ENCODE measurements at regions of chr2 and their contacts with region 1.

Region 1: DNA sequence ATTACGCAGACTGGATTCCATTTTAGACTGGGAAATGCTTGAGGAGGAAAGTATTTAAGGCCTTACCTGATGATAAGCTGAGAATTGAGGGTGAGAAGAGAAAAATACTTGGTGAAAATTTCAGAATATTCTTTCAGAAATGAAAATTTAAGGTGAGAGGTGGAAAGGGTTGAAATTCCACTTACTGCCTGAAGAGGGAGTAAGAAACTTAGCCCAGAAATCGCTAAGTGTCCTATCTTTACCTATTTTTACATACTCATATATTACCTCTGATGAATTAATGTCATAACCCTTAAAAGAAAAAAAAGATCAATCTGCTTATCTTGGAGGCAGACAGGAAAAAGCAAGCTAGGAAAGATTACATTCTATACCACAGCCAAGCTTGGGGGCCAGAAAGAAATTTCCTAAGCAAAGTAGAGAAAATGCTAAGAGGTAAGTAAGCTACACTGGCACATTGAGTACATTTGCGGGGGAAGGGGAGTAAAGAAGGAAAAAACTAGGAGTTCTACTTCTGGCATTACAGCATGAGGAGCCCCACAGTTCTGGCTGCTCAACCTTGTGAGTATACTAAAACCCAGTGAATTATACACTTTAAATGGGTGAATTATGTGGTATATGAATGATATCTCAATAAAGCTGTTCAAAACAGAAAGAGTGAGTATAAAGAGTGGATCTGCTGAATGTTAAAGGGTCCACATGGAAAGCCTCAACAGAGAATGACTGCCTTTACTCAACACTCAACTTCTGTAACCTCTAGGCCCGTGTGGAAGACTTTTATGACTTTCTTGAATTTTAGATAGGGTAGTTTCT is 33.8 kb downstream of the SMC6 start:
- DNase-seq: peak; percentile 24
- H3K4me3 ChIP-seq: no peak overlapping the region; a peak in 1 of 4 replicates
- H3K27ac ChIP-seq: 0 out of 4 replicates have a peak overlapping the region, but pooled peaks of 1 of the 2 experiments have one; percentile 5
- H3K4me1 ChIP-seq: no peaks in the 10 kb centered on the region
- H3K27me3 ChIP-seq: no peaks in the 10 kb centered on the region
- CTCF ChIP-seq: peak; percentile 94
- EP300 ChIP-seq: no peak
- RAD21 ChIP-seq: peak; percentile 82

Region 2: DNA sequence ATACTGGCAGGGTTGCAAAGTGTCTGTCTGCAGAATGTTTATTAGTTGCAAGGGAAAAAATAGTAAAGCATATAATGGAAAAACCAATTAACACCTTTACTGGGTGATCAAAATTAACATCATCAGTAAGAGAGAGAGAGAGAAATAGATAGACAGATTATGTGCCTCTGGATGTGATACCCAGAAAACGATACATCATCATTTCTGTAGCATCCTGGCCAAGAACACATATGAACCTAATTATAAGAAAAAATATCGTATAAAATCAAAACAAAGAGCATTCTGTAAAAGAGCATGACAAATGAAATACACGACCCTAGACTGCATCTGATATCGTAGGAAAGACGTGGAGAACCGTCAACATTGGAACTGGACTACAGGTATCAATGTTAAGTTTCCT is 30.8 kb before region 1 on chr2:
- CTCF ChIA-PET with region 1: interaction called, 10 read pairs
- POLR2A ChIA-PET with region 1: no interaction called
- DNase-seq: no peak
- H3K4me3 ChIP-seq: no peak overlapping the region
- H3K27ac ChIP-seq: no peak overlapping the region
- H3K4me1 ChIP-seq: no peaks in the 10 kb centered on the region
- H3K27me3 ChIP-seq: no peaks in the 10 kb centered on the region
- CTCF ChIP-seq: no peak
- EP300 ChIP-seq: no peak
- RAD21 ChIP-seq: no peak

Region 3: GRCh38 chr2:17736989-17737388 is 17.2 kb after region 1 on chr2:
- CTCF ChIA-PET with region 1: interaction called, 42 read pairs
- POLR2A ChIA-PET with region 1: no interaction called
- DNase-seq: no peak
- H3K4me3 ChIP-seq: no peak overlapping the region
- H3K27ac ChIP-seq: peak overlapping the region in 1 of 2 experiments; percentile 89; a peak in 3 of 4 replicates
- H3K4me1 ChIP-seq: peaks cover 2 to 9% of the 10 kb centered on the region in 2 experiments; a peak in 3 of 4 replicates
- H3K27me3 ChIP-seq: no peaks in the 10 kb centered on the region
- CTCF ChIP-seq: no peak
- EP300 ChIP-seq: no peak
- RAD21 ChIP-seq: no peak

Region 4: DNA sequence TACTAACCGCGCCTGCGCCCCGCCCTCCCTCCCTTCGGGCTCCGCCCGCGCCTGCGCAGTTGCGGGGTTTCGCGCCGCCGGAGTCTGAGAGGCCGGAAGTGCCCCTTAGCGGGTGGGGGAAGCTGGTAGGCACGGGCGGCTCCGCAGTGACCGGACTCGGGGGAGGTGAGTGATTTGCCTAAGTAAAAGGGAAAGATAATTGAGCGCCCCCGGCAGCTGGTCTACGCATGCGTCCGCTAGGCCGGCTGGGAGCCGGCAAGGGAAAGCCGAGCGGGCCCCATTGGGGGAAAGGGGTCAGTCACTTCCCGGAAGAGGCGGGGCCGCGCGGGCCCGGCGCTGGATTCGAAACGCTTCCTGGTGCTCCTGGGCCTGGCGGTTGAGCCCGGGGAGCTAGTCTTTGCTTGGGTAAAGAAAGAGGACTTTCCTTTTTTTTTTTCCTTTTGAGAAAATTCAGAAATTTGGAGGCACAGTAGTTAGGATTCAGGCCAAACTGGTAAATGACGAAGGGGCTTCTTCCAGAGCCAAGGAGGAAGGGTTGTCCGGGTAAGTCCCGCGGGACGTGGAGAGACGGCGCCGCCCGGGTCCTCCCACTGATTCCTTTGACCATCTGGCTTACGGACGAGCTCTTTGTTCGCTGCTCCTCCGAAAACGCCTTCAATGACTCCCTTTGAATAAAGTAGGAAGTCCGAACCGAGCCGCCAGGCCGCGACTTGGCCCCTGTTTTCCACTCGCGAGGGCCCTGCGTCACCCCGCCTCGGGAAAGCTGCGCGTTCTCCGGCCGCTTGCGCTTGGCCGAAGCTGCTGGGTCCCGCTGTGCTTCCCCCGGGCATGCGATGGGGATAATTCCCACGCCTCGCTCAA is 34.3 kb after region 1 on chr2 and contains the starts of genes GEN1 and SMC6:
- CTCF ChIA-PET with region 1: interaction called, 23 read pairs
- POLR2A ChIA-PET with region 1: no interaction called
- DNase-seq: peak; percentile 99
- H3K4me3 ChIP-seq: peak within 1 kb of the TSS; percentile 84 to 99
- H3K27ac ChIP-seq: peak within 1 kb of the TSS; percentile 98 to 100
- H3K4me1 ChIP-seq: peaks cover 25 to 40% of the 10 kb centered on the region in 2 experiments
- H3K27me3 ChIP-seq: no peaks in the 10 kb centered on the region
- CTCF ChIP-seq: no peak
- EP300 ChIP-seq: no peak; a peak in 1 of 4 replicates
- RAD21 ChIP-seq: no peak
- polyA plus RNA-seq, gene GEN1: 5.3 and 7.8 TPM in 2 replicates
- polyA plus RNA-seq, gene SMC6: 6.5 and 8.2 TPM in 2 replicates

Region 5: GRCh38 chr2:17786727-17787126 is 67.0 kb after region 1 on chr2:
- CTCF ChIA-PET with region 1: interaction called, 11 read pairs
- POLR2A ChIA-PET with region 1: no interaction called
- DNase-seq: no peak
- H3K4me3 ChIP-seq: no peak overlapping the region
- H3K27ac ChIP-seq: no peak overlapping the region
- H3K4me1 ChIP-seq: peaks cover 4 to 22% of the 10 kb centered on the region in 2 experiments; a peak in 2 of 4 replicates
- H3K27me3 ChIP-seq: no peaks in the 10 kb centered on the region
- CTCF ChIP-seq: no peak
- EP300 ChIP-seq: no peak
- RAD21 ChIP-seq: no peak

Region 6: GRCh38 chr2:17851731-17852585 is 132.2 kb after region 1 on chr2:
- CTCF ChIA-PET with region 1: interaction called, 20 read pairs
- POLR2A ChIA-PET with region 1: no interaction called
- DNase-seq: peak; percentile 76
- H3K4me3 ChIP-seq: no peak overlapping the region; a peak in 1 of 4 replicates
- H3K27ac ChIP-seq: no peak overlapping the region
- H3K4me1 ChIP-seq: no peaks in the 10 kb centered on the region; a peak in 1 of 4 replicates
- H3K27me3 ChIP-seq: no peaks in the 10 kb centered on the region; the same call in 1 of the 2 replicates
- CTCF ChIP-seq: peak; percentile 95
- EP300 ChIP-seq: no peak
- RAD21 ChIP-seq: peak; percentile 98

Measured in SK-N-SH (cell line).